IMR-90 (cell line): ENCODE measurements at regions of chr19 and their contacts with region 1.

Region 1: DNA sequence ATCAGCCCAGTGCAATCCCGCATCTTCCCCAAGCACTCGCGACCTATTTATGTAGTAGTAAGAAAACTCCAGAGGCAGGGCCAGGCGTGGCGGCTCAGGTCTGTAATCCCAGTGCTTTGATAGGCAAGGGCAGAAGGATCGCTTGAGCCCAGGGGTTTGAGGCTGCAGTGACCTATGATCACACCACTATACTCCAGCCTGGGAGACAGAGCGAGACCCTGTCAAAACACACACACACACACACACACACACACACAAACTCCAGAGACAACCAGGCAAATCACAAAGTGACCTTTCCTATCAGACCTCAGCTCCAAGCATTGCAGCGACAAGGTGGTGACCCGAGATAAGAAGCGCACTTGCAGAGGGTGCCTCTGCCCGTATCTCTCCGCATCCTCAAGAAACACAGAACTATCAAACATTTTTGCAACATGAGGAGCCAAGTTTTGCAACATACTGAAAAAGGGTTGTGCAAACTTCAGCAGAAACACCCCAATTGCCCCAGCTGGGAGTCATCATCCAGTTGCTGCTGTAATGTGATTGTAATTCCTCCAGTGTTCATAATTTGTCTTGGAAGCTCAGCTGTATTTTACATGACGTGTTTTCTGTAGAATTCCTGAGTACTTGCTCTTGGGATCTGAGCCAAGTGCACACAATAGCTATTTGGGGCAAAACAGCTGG is 8.7 kb upstream of the KLF2 start:
- DNase-seq: peak; percentile 99
- ATAC-seq: peak; percentile 83
- H3K4me3 ChIP-seq: no peak overlapping the region
- H3K27ac ChIP-seq: peak overlapping the region; percentile 66
- H3K4me1 ChIP-seq: peaks cover 12% of the 10 kb centered on the region
- H3K27me3 ChIP-seq: no peaks in the 10 kb centered on the region
- CTCF ChIP-seq: no peak
- POLR2A ChIP-seq: no peak
- RAD21 ChIP-seq: peak; percentile 16; the same call in 1 of the 2 replicates

Region 2: DNA sequence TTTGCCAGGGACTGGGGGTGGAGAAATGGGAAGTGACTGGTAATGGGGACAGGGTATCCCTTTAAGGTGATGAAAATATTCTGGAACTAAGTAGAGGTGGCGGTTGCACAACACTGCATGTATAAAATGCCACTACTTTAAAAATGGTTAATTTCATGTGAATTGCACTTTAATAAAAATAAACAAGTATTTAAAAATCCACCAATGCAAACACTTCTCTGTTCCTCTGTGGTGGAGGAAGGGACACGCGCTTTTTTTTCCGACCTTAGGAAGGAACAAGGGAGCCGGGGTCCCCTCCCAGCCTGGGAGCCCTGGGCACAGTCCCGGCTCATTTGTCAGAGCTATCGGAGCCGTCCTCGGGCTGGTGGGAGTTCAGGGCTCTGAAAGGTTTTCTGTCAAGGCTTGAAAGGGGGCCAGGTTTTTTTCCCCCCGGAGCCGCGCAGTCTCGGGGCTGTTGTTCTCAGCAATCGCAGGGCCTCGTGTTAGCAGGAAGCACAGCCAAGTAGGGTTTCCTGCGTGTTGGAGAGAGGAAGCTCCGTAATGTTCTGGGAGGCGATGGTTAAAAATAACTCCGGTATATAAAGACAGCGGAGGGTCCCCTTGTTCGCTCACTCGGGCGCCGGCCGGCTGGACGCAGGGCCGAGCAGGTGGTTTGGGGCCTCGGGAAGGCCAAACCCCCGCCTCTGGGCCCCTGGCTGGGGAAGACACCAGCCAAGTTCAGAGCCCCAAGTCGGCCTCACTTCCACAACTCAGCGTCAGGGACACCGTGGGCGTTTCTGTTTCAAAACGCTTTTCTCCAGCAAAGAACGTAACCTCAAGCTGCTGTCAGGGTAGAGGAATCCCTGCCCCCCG is 32.5 kb before region 1 on chr19:
- CTCF ChIA-PET with region 1: no interaction called
- POLR2A ChIA-PET with region 1: no interaction called
- dilution Hi-C with region 1: no loop called
- in situ Hi-C with region 1: no loop called
- intact Hi-C with region 1: loop called (anchors 5 kb)
- DNase-seq: peak; percentile 70
- ATAC-seq: peak; percentile 57
- H3K4me3 ChIP-seq: no peak overlapping the region
- H3K27ac ChIP-seq: peak overlapping the region; percentile 42
- H3K4me1 ChIP-seq: peaks cover 6% of the 10 kb centered on the region
- H3K27me3 ChIP-seq: peaks cover 15% of the 10 kb centered on the region
- CTCF ChIP-seq: no peak
- POLR2A ChIP-seq: no peak
- RAD21 ChIP-seq: no peak

Region 3: GRCh38 chr19:16293118-16294091 is 22.6 kb before region 1 on chr19:
- CTCF ChIA-PET with region 1: no interaction called
- POLR2A ChIA-PET with region 1: no interaction called
- dilution Hi-C with region 1: no loop called
- in situ Hi-C with region 1: no loop called
- intact Hi-C with region 1: loop called (anchors 1 kb)
- DNase-seq: peak; percentile 99
- ATAC-seq: peak; percentile 91
- H3K4me3 ChIP-seq: peak overlapping the region; percentile 42
- H3K27ac ChIP-seq: peak overlapping the region; percentile 87
- H3K4me1 ChIP-seq: peaks cover 7% of the 10 kb centered on the region
- H3K27me3 ChIP-seq: peaks cover 4% of the 10 kb centered on the region; the same call in 1 of the 2 replicates
- CTCF ChIP-seq: no peak
- POLR2A ChIP-seq: peak; percentile 67
- RAD21 ChIP-seq: no peak